ENCODE measurements at regions of chr12 and their contacts with region 1.

Region 1: DNA sequence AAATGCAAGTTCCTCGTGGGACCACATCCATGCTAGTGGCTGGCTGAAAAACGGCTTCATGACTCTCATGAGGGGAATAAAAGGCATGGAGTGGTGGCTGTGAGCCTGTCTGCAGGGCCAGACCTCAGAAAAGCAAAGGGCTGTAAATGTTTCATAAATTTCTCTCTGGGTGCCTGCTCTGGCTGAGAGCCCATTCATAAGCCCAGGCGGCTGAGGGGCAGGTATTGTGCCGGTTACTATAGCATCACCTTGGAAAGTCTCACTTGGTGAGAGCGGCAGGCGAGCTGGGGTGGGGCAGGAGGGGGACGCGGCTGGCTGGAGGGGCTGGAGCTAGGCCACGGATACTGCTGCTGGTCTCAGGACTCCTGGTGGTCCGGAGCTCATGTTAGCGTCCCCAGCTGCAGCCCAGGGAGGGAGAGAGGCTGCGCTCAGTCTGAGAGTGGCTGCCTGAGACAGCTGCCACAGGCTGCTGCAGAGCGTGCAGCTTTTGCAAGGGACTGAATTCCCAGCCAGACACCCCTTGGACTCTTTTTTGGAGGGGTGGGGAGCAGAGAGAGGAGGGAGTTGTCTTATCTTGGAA is at the start of gene SLC17A8:
- DNase-seq: no peak
- H3K4me3 ChIP-seq: no peak within 1 kb of the TSS
- H3K27ac ChIP-seq: no peak within 1 kb of the TSS
- H3K4me1 ChIP-seq: no peaks in the 10 kb centered on the region
- H3K27me3 ChIP-seq: no peaks in the 10 kb centered on the region
- CTCF ChIP-seq: no peak
- POLR2A ChIP-seq: no peak
- total RNA-seq, gene SLC17A8: not detected

Region 2: GRCh38 chr12:99875081-99875480 is 481.7 kb before region 1 on chr12:
- intact Hi-C with region 1: no loop called
- DNase-seq: no peak
- H3K4me3 ChIP-seq: no peak overlapping the region
- H3K27ac ChIP-seq: no peak overlapping the region
- H3K4me1 ChIP-seq: no peaks in the 10 kb centered on the region
- H3K27me3 ChIP-seq: no peaks in the 10 kb centered on the region
- CTCF ChIP-seq: no peak
- POLR2A ChIP-seq: no peak

Region 3: GRCh38 chr12:100058482-100059029 is 298.2 kb before region 1 on chr12:
- intact Hi-C with region 1: no loop called
- DNase-seq: no peak
- H3K4me3 ChIP-seq: no peak overlapping the region
- H3K27ac ChIP-seq: no peak overlapping the region
- H3K4me1 ChIP-seq: no peaks in the 10 kb centered on the region
- H3K27me3 ChIP-seq: no peaks in the 10 kb centered on the region
- CTCF ChIP-seq: no peak
- POLR2A ChIP-seq: no peak

Region 4: GRCh38 chr12:100554608-100555077 is 197.9 kb after region 1 on chr12:
- intact Hi-C with region 1: loop called (anchors 10 kb)
- DNase-seq: no peak
- H3K4me3 ChIP-seq: no peak overlapping the region
- H3K27ac ChIP-seq: no peak overlapping the region
- H3K4me1 ChIP-seq: no peaks in the 10 kb centered on the region
- H3K27me3 ChIP-seq: no peaks in the 10 kb centered on the region
- CTCF ChIP-seq: peak; percentile 55 to 85 (median 74)
- POLR2A ChIP-seq: no peak

Region 5: DNA sequence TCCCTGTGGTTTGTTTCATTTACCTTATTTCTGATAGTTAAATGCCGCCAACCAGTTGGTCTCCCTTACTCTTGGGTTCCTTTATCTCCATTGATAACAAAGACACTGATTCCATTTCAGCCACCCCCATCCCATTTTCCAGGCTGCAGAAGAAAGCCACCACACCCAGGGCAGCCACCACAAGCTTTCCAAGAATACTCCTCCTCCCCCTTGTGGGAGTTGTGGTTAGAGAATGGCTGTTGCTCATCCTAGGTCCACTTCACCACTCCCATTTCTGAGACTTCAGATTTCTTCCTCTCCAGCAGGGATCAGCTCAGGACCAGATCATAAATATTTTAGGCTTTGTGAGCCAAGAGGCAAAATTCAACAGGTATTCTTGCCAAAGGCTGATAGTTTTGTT is 511.8 kb after region 1 on chr12:
- intact Hi-C with region 1: no loop called
- DNase-seq: no peak
- H3K4me3 ChIP-seq: no peak overlapping the region
- H3K27ac ChIP-seq: no peak overlapping the region
- H3K4me1 ChIP-seq: no peaks in the 10 kb centered on the region
- H3K27me3 ChIP-seq: no peaks in the 10 kb centered on the region
- CTCF ChIP-seq: no peak
- POLR2A ChIP-seq: no peak

Measured in prostate gland (tissue), 2 donors.